Endothelial cell of umbilical vein (primary cell): ENCODE measurements at regions of chr17 and their contacts with region 1.

Region 1: DNA sequence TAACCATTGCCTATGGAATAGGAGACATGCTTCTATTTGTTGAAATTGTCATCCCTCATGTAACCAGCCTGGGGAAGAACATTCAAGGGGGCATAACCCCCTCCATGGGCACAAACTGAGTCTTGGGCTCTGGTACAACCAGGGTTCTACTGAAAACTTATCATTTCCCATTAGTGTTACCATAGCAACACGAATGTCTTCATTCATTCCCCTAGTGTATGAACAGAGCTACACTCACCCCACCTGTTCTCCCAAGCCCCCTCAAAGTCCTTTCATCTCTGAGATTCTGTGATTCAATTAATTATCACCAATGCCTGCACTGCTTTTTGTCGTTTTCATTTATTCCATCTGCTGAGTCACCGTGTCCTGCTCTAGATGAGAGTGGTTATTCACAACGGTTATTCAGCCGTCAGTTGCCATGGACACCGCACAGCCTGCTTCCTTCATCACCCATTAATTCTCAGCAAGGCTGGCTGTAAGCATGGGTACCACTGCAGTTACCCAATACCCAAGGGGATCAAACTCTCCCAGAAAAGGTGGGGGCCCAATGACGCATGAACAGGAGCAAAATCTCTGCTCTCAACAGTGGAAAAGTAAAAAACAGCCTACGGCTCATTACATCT is 1.6 kb upstream of the GAST start:
- DNase-seq: peak; percentile 35
- H3K4me3 ChIP-seq: no peak overlapping the region
- H3K27ac ChIP-seq: no peak overlapping the region
- H3K4me1 ChIP-seq: no peaks in the 10 kb centered on the region
- H3K27me3 ChIP-seq: peaks cover 6 to 8% of the 10 kb centered on the region in 2 experiments
- CTCF ChIP-seq: no peak
- POLR2A ChIP-seq: no peak

Region 2: GRCh38 chr17:41665566-41666236 is 44.9 kb before region 1 on chr17:
- CTCF ChIA-PET with region 1: no interaction called
- POLR2A ChIA-PET with region 1: no interaction called
- dilution Hi-C with region 1: no loop called
- intact Hi-C with region 1: no loop called
- DNase-seq: peak; percentile 83
- H3K4me3 ChIP-seq: peak overlapping the region in 2 of 3 experiments; percentile 13 to 32
- H3K27ac ChIP-seq: peak overlapping the region; percentile 49
- H3K4me1 ChIP-seq: peaks cover 23% of the 10 kb centered on the region
- H3K27me3 ChIP-seq: no peaks in the 10 kb centered on the region
- CTCF ChIP-seq: peak; percentile 96 to 99
- POLR2A ChIP-seq: no peak

Region 3: DNA sequence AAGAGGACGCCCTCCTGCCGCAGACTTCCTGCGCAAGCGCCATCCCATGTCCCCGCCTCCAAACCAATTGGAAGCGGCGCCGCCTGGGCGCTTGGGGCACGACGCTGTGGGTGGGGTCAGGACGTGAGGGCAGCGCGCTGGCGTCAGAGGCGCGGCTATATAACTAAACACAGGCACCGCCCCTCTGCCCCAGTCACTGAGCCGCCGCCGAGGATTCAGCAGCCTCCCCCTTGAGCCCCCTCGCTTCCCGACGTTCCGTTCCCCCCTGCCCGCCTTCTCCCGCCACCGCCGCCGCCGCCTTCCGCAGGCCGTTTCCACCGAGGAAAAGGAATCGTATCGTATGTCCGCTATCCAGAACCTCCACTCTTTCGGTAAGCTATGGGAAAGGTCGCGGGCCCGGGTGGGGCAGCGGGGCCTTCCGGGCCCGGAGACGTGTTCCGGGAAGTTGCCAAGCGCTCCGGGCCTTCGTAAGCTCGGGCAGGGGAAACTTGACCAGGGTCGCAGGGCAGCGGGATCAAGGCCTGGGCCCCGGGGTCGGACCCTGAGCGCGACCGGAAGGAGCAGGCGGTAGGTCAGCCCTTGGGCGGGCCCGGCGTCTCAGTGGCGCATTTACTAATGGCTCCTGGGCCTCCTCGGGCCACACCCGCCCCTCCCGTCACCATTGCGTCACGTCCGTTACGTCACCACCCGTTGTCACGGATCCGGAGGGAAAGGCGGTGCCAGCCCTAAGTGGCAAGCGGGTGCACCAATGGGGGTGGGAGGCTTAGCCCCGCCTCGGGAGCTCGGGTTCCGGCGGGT is 21.7 kb before region 1 on chr17 and contains the start of gene EIF1:
- CTCF ChIA-PET with region 1: no interaction called
- POLR2A ChIA-PET with region 1: interaction called, 16 read pairs
- dilution Hi-C with region 1: no loop called
- intact Hi-C with region 1: no loop called
- DNase-seq: peak; percentile 100
- H3K4me3 ChIP-seq: peak within 1 kb of the TSS; percentile 68 to 95 (median 73)
- H3K27ac ChIP-seq: peak within 1 kb of the TSS; percentile 97
- H3K4me1 ChIP-seq: peaks cover 20% of the 10 kb centered on the region
- H3K27me3 ChIP-seq: no peaks in the 10 kb centered on the region
- CTCF ChIP-seq: no peak
- POLR2A ChIP-seq: peak; percentile 95
- total RNA-seq, gene EIF1: 814 and 839 TPM in 2 replicates